ENCODE measurements at regions of chr4 and their contacts with region 1.

Region 1: DNA sequence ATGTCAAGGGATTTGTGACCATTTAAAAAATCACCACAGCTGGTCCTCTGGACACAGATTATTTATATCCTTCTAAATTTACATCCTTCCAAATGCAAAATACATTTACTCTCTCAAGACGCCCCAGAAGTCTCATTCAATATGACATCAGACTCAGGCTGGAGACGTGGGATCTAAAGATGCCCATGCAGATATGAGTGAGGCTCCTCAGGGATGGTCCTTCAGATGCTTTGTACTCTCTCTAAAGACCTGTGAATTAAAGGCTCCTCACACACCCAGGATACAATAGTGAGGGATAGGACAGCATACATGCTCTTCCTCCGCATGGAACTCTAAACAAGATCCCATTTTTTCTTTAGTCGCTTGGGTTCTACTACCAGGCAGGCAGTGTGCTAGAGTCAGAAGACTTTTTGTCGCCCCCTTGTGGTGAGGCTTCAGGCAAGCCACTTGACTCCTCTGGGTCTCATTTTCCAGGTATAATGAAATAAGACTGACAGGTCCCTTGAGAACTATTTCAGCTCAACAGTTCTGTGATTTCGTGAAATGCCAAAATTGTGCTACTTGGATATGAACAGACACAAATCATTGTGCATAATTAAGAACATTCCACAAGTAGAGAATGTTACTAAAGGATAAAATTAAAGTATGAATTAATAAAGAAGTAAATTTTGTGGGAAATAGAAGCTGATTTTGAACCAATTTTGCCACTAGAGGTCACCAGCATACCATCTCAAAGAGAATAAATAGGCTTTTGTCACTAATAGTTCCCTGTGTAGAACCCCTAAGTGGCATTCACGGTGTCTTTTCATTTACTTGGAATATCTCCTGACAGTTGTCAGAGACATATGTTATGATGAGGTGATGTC is 13.7 kb upstream of the SCOC start:
- DNase-seq: peak; percentile 70 to 84 (median 74)
- ATAC-seq: peak; percentile 79 to 83
- H3K4me3 ChIP-seq: no peak overlapping the region
- H3K27ac ChIP-seq: no peak overlapping the region
- H3K4me1 ChIP-seq: peaks cover 3% of the 10 kb centered on the region
- H3K27me3 ChIP-seq: no peaks in the 10 kb centered on the region

Region 2: GRCh38 chr4:139470997-139471665 is 888.7 kb before region 1 on chr4:
- intact Hi-C with region 1: no loop called
- DNase-seq: no peak
- ATAC-seq: no peak
- H3K4me3 ChIP-seq: no peak overlapping the region
- H3K27ac ChIP-seq: no peak overlapping the region
- H3K4me1 ChIP-seq: no peaks in the 10 kb centered on the region
- H3K27me3 ChIP-seq: no peaks in the 10 kb centered on the region

Region 3: DNA sequence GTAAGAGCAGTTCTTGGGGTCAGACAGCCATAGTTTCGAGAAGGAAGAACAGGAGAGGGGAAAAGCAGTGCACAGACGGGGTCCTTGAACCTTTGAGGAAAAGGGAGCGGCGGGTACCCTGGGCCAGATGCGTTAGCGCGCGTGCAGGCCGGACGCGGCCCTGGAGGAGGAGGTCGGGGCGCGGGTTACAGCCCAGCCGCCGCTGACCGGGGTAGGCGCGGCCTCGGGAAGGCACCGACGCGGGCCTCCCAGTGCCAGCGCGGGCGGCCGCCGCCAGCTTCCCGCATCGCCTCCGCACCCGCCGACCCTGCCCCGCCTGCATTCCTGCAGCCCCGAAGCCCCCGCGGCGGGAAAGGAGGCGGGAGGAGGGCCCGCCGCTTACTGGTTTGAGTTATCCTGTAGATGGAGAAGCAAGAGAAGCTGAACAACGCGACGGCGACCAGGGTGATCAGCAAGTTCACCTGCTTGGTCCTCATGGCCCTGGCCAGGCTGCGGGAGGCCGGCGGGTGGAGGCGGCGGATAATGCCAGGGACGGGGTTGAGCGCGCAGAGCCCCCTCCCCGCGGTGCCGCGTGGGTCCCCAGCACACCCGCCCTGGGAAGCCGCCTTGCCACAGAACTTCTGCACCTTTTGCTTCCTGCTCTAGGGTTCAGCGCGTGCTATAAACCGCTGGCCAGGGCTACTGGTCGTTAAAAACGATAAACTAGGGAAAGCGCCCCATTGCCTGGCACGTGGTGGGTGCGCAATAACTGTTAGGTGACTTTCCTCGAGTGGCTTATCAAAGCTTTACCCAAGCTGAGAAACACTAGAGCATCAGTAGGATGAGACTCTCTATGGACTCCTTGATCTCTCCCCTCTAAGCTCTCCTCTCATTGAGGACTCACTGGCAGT is 138.2 kb after region 1 on chr4 and contains the start of gene MGAT4D:
- intact Hi-C with region 1: no loop called
- DNase-seq: peak in 2 of 3 donors; percentile 44 to 46
- ATAC-seq: peak in 1 of 2 donors; percentile 53
- H3K4me3 ChIP-seq: peak within 1 kb of the TSS; percentile 29
- H3K27ac ChIP-seq: no peak within 1 kb of the TSS
- H3K4me1 ChIP-seq: no peaks in the 10 kb centered on the region
- H3K27me3 ChIP-seq: no peaks in the 10 kb centered on the region
- total RNA-seq, gene MGAT4D: not detected

Region 4: DNA sequence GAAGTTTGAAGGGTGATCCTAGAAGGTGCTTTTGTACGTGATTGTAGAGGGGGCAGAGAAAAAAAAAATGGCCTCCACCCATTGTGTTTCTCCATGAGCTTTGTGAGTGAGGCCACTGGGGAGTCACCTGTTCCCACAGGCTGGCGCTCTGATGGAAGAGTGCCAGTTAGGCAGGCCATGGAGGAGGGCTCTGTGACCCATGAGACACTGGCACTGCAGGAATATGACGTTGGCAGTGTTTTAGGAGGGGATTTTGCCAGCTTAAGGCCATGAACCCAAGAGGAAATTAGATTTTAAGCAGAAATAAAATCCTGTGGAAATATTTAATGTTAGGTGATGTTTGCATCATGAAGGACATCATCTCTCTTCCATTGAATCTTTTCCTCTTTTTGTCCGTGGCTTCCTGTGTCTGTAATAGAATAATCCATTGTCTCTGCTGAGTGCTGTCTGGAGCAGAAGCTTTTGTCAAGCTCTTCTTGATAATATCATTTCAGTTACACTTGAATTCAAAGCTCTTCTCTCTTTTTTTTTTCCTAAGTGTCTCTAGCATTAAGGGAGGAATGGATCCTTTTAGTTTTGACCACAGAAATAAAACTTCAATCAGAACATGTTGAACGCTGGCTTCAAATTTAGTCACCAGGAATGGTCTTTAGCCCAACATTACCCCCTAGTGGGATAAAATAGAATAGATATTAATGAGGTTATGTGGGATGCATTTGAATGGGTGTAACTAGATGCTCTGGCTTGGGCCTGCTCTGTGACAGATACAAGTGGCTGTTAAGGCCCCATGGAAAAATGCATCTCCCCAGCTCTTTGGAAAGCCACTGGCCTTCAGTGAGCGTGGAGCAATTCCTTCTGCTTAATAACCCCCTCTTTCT is 250.0 kb after region 1 on chr4:
- intact Hi-C with region 1: loop called (anchors 5 to 10 kb)
- DNase-seq: peak in 1 of 3 donors; percentile 45
- ATAC-seq: peak; percentile 75 to 87
- H3K4me3 ChIP-seq: no peak overlapping the region
- H3K27ac ChIP-seq: no peak overlapping the region
- H3K4me1 ChIP-seq: no peaks in the 10 kb centered on the region
- H3K27me3 ChIP-seq: no peaks in the 10 kb centered on the region

Region 5: DNA sequence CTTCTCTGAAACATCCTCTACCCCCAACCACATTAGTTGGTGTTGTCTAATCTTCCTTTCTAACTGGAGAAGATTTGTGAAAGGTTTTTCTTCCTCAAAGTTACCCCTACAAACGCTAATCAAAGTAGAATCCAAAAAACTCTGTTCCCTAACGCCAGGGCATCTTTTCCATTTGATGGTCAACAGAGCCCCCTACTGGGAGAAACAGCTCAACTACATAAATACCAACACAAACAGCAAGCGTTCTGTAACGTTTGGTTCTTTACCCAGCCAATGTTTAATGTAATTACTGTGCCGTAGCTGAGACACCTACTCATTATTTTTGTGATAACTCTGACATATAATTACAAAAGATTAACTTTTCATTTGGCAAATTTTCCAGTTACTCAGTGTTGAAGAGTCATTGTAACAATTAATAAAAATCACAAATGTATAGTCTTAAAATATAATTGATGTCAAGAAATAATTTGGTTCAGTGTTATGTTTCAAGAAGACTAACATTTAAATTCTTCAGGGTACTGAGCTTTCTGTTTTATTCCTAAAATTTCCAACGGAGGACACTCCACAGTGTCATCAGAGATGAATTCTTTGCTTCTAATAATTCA is 491.3 kb after region 1 on chr4:
- intact Hi-C with region 1: loop called in 3 of 4 experiments (anchors 10 kb)
- DNase-seq: no peak
- ATAC-seq: peak; percentile 60 to 68
- H3K4me3 ChIP-seq: no peak overlapping the region
- H3K27ac ChIP-seq: no peak overlapping the region
- H3K4me1 ChIP-seq: peaks cover 4% of the 10 kb centered on the region
- H3K27me3 ChIP-seq: no peaks in the 10 kb centered on the region